PC-9 (cell line): ENCODE measurements at regions of chr7 and their contacts with region 1.

Region 1: DNA sequence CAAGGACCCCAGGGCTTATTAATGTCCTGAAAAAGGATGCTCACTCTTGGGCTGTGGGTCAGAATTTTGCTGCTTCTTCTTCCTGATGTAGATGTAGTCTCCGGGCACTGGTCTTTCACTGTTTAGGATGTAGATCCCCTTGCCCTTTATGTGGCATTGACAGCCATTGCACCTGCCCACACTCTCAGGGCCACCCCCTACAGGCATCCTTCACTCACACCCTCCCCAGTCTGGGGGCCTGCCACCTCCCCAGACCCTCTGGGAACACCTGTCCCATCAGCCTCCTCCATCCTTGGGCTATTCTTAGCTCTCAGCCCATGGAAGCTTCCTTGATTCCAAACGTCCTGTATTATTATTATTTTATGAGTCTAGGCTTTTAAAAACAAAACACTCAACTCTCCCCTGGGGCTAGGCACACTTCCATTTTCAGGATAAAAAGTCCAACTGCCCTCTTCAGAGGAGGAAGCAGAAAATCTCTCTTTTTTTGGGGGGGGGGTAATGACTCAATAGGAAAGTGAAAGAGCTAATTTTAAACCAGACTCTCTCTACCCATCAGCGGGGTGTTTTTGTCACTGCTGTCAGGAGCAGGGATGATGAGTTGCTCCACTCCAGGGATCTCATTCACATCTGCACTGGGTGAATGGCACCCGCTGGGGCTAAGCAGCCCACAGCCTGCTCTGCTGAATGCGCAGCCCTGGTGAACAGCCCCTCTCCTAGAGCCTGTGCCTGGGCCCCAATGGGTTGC is 11.5 kb upstream of the KLRG2 start:
- DNase-seq: no peak
- H3K4me3 ChIP-seq: no peak overlapping the region
- H3K27ac ChIP-seq: no peak overlapping the region
- H3K4me1 ChIP-seq: no peaks in the 10 kb centered on the region
- H3K27me3 ChIP-seq: no peaks in the 10 kb centered on the region
- CTCF ChIP-seq: no peak

Region 2: GRCh38 chr7:141238596-141239243 is 1743.7 kb after region 1 on chr7:
- CTCF ChIA-PET with region 1: interaction called, 16 read pairs
- POLR2A ChIA-PET with region 1: no interaction called
- intact Hi-C with region 1: no loop called
- DNase-seq: no peak
- H3K4me3 ChIP-seq: no peak overlapping the region
- H3K27ac ChIP-seq: no peak overlapping the region
- H3K4me1 ChIP-seq: no peaks in the 10 kb centered on the region
- H3K27me3 ChIP-seq: peaks cover 71% of the 10 kb centered on the region
- CTCF ChIP-seq: no peak